H1 (cell line): ENCODE measurements at regions of chr3 and their contacts with region 1.

Region 1: GRCh38 chr3:126348308-126348920 is 8.8 kb downstream of the KLF15 start:
- DNase-seq: peak in 1 of 2 experiments; percentile 52
- H3K4me3 ChIP-seq: no peak overlapping the region
- H3K27ac ChIP-seq: no peak overlapping the region
- H3K4me1 ChIP-seq: peaks cover 0 to 2% (median 0%) of the 10 kb centered on the region in 4 experiments; a peak in 4 of 7 replicates
- H3K27me3 ChIP-seq: no peaks in the 10 kb centered on the region
- CTCF ChIP-seq: peak in 2 of 3 experiments; percentile 66 to 71; a peak in 3 of 4 replicates
- EP300 ChIP-seq: no peak
- POLR2A ChIP-seq: no peak
- RAD21 ChIP-seq: peak; percentile 44 to 68

Region 2: GRCh38 chr3:126261037-126261436 is 87.4 kb before region 1 on chr3:
- CTCF ChIA-PET with region 1: interaction called, 12 read pairs
- POLR2A ChIA-PET with region 1: no interaction called
- DNase-seq: no peak
- H3K4me3 ChIP-seq: no peak overlapping the region
- H3K27ac ChIP-seq: no peak overlapping the region
- H3K4me1 ChIP-seq: peaks cover 0 to 11% (median under 1%) of the 10 kb centered on the region in 4 experiments; a peak in 5 of 7 replicates
- H3K27me3 ChIP-seq: no peaks in the 10 kb centered on the region; a peak in 2 of 7 replicates
- CTCF ChIP-seq: no peak
- EP300 ChIP-seq: no peak
- POLR2A ChIP-seq: no peak
- RAD21 ChIP-seq: no peak

Region 3: GRCh38 chr3:126274735-126275619 is 73.4 kb before region 1 on chr3:
- CTCF ChIA-PET with region 1: interaction called, 10 read pairs
- POLR2A ChIA-PET with region 1: no interaction called
- DNase-seq: no peak
- H3K4me3 ChIP-seq: no peak overlapping the region
- H3K27ac ChIP-seq: no peak overlapping the region
- H3K4me1 ChIP-seq: peaks cover 0 to under 1% (median 0%) of the 10 kb centered on the region in 4 experiments; a peak in 1 of 7 replicates
- H3K27me3 ChIP-seq: no peaks in the 10 kb centered on the region
- CTCF ChIP-seq: no peak
- EP300 ChIP-seq: no peak
- POLR2A ChIP-seq: no peak
- RAD21 ChIP-seq: no peak

Region 4: DNA sequence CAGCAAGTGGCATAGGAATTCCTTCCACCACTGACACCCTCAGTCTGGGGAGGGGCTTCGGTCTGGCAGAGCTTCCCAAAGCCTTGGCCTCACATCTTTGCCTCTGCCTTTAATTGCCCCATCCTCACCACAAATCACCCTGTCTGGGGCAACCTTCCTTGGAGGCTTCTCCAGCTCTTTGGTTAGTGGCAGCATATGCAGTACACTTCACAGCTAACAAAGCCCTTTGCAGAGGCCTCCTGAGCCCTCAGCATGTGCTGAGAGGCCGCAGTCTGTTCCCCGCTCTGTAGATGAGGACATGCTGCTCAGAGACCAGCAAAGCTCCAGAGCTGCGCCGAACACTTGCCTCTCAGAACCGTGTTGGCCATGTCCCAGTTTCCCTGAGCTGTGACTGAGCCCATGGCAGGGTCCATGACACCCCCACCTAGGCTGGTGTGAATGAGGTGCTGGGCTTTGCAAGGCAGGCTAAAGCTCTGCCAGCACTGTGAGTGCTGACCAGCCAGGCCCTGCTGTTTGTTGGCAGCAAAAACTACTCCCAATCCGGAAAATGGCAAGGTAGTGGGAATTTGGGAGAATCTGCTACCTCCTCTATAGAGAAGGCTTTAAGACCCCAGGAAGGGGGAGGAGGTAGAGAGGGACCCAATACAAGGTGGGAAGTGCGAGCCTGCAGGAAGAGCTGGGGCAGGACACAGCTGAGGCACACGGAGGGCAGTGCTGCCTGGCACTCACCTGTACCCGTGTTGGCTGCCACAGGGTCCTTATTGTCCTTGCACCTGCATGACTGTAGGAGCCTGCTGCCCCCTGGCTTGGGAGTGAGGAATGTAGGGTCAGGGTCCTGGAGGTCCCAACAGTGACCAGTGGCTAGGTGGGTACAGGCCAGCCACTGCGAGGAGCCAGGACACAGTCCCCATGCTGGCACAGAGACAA is 17.2 kb after region 1 on chr3:
- CTCF ChIA-PET with region 1: interaction called, 30 read pairs
- POLR2A ChIA-PET with region 1: interaction called, 9 read pairs
- DNase-seq: no peak
- H3K4me3 ChIP-seq: no peak overlapping the region
- H3K27ac ChIP-seq: no peak overlapping the region
- H3K4me1 ChIP-seq: peaks cover 0 to 17% (median 8%) of the 10 kb centered on the region in 4 experiments
- H3K27me3 ChIP-seq: no peaks in the 10 kb centered on the region
- CTCF ChIP-seq: peak in 2 of 3 experiments; percentile 32 to 60; a peak in 3 of 4 replicates
- EP300 ChIP-seq: no peak
- POLR2A ChIP-seq: no peak
- RAD21 ChIP-seq: peak; percentile 63 to 72

Region 5: DNA sequence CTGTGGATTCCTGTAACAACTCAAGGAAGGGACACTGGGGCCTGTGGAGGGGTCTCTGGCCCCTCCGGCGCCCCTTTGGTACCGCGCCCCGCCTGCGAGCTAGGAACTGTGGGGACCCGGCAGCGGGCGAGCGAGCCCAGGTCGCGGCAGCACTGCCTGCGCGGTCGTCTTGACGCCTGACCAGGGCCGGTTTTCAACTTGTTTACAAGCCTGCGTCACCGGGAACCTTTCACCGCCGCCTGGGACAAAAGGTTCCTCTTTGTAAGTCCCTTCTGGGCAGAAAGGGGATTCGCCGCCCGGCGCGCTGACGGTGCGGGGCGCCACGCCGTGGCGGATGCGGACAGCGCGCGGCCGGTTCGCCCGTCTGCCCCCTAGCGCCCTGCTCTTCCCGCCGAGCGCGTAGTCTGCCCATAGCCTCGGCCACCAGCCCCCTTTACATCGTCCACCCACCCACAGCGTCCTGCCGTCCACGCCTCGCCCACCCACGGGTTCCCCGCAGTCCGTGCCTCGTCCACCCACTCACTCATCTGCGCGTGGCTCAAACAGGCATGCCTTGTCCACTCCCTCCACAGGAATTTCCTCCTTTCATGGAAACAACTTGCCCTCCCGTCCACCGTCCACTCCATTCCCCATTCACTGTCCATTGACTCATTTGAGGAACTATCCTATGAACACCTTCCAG is 40.8 kb after region 1 on chr3:
- CTCF ChIA-PET with region 1: interaction called, 12 read pairs
- POLR2A ChIA-PET with region 1: no interaction called
- DNase-seq: peak; percentile 79 to 86
- H3K4me3 ChIP-seq: peak overlapping the region in 2 of 4 experiments; percentile 7 to 53; a peak in 4 of 8 replicates
- H3K27ac ChIP-seq: no peak overlapping the region; the same call in 1 of the 2 replicates
- H3K4me1 ChIP-seq: peaks cover 0 to 8% (median 3%) of the 10 kb centered on the region in 4 experiments; a peak in 4 of 7 replicates
- H3K27me3 ChIP-seq: peaks cover 8 to 18% (median 17%) of the 10 kb centered on the region in 4 experiments
- CTCF ChIP-seq: peak in 2 of 3 experiments; percentile 92 to 100; a peak in 3 of 4 replicates
- EP300 ChIP-seq: peak in 1 of 2 experiments; percentile 28; a peak in 1 of 3 replicates
- POLR2A ChIP-seq: peak in 1 of 2 experiments; percentile 39; a peak in 1 of 3 replicates
- RAD21 ChIP-seq: peak; percentile 89 to 91

Region 6: GRCh38 chr3:126537730-126538281 is 189.4 kb after region 1 on chr3:
- CTCF ChIA-PET with region 1: no interaction called
- POLR2A ChIA-PET with region 1: no interaction called
- DNase-seq: no peak
- H3K4me3 ChIP-seq: no peak overlapping the region
- H3K27ac ChIP-seq: no peak overlapping the region
- H3K4me1 ChIP-seq: no peaks in the 10 kb centered on the region
- H3K27me3 ChIP-seq: peaks cover 0 to 5% (median 2%) of the 10 kb centered on the region in 4 experiments; a peak in 1 of 7 replicates
- CTCF ChIP-seq: no peak
- EP300 ChIP-seq: no peak
- POLR2A ChIP-seq: no peak
- RAD21 ChIP-seq: no peak